SK-N-SH (cell line): ENCODE measurements at regions of chr15 and their contacts with region 1.

Region 1: GRCh38 chr15:50594311-50594710 is 47.8 kb upstream of the USP50 start:
- DNase-seq: no peak
- H3K4me3 ChIP-seq: no peak overlapping the region
- H3K27ac ChIP-seq: no peak overlapping the region
- H3K4me1 ChIP-seq: no peaks in the 10 kb centered on the region
- H3K27me3 ChIP-seq: no peaks in the 10 kb centered on the region
- CTCF ChIP-seq: no peak
- EP300 ChIP-seq: no peak
- RAD21 ChIP-seq: no peak

Region 2: DNA sequence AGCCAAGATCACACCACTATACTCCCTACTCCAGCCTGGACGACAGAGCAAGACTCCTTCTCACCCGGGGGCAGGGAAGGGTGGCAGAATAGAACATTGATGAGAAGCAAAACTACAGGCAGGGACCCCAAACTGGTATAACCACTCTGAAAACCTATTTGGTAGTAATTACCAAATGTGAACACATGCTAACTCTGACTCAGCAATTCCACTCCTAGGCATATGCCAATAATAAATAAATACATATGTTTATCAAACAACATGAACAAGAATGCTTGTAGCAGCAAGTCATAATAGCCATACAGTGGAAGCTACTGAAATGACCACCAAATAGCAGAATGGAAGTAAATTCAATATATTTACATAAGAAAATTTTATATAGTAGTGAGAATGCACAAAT is 16.8 kb before region 1 on chr15:
- CTCF ChIA-PET with region 1: no interaction called
- POLR2A ChIA-PET with region 1: no interaction called
- DNase-seq: no peak
- H3K4me3 ChIP-seq: no peak overlapping the region
- H3K27ac ChIP-seq: no peak overlapping the region
- H3K4me1 ChIP-seq: no peaks in the 10 kb centered on the region
- H3K27me3 ChIP-seq: no peaks in the 10 kb centered on the region
- CTCF ChIP-seq: no peak
- EP300 ChIP-seq: no peak
- RAD21 ChIP-seq: no peak

Region 3: DNA sequence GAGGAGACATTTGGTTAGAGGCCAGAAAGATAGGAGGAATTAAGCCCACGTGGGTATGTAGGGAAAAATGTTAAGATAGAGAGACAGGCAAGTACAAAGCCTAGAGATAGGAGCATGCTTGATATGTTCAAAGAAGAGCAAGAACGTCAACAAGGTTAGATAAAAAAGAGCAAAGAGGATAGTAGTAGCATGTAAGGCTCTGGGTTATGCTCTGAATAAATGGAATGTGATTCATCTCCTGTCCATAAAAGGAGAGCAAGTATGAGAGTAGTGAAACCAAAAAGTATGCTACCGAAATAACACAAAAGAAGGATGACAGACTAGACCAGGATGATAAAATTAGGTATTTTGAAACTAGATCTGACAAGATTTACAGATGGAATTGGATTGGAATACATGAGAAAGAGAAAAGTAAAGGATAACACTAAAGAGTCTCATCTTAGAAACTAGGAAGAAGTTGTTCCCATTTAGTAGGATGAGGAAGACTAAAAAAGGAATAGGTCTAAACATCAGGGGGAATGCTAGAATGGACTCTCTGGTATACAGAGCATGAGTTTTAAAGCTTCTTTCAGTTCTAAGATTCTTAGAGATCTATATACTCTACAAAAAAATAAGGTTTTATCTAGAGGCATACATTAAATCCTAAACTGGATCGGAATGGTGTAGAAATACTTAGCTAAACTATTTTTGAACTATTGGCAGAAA is 33.2 kb after region 1 on chr15:
- CTCF ChIA-PET with region 1: interaction called, 11 read pairs
- POLR2A ChIA-PET with region 1: no interaction called
- DNase-seq: no peak
- H3K4me3 ChIP-seq: no peak overlapping the region
- H3K27ac ChIP-seq: peak overlapping the region; percentile 8 to 39; a peak in 2 of 4 replicates
- H3K4me1 ChIP-seq: no peaks in the 10 kb centered on the region
- H3K27me3 ChIP-seq: no peaks in the 10 kb centered on the region
- CTCF ChIP-seq: no peak
- EP300 ChIP-seq: no peak
- RAD21 ChIP-seq: no peak